ENCODE measurements at regions of chr6 and their contacts with region 1.

Region 1: GRCh38 chr6:131182991-131183425 is 47.7 kb downstream of the AKAP7 start:
- DNase-seq: peak; percentile 46
- H3K4me3 Mint-ChIP-seq: no peak overlapping the region
- H3K27ac Mint-ChIP-seq: peak overlapping the region; percentile 85
- H3K4me1 Mint-ChIP-seq: peaks cover 11% of the 10 kb centered on the region
- H3K27me3 Mint-ChIP-seq: no peaks in the 10 kb centered on the region

Region 2: DNA sequence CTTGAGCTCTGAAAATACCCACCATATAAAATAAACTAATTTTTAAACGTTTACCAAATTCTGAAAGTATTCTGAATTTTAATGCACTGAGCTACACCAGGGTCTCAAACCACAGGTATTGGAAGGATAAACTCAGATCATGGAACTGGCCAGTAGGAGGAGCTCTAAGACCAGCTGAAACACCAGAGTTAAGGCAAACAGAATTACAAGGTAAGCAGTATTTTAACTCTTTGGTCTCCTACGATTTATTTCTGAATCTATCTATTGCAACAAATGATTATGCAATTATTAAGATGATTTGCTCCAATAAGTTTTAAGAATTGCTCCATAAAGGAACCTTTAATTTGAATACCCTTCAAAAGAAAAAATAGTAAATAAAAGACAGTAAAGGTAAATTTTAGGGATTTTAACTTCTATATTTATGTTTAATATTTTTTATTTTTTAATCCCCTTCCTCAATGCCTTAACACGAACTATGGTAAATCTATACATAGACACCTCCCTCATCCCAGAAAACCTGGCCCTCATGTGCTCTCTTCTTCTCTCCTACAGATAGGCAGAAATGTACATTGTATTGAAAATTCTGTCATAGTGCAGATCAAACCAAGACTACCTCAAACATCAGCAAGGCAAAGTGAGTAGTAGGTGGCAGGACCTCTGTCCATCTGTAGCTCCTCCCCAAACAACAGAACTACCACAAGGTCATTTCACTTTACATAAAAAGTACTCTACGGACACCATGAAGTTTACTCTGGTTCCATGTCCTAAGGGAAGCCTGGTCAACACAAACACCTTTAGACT is 297.4 kb before region 1 on chr6:
- CTCF ChIA-PET with region 1: interaction called, 11 read pairs
- DNase-seq: peak; percentile 82
- H3K4me3 Mint-ChIP-seq: no peak overlapping the region
- H3K27ac Mint-ChIP-seq: no peak overlapping the region
- H3K4me1 Mint-ChIP-seq: no peaks in the 10 kb centered on the region
- H3K27me3 Mint-ChIP-seq: no peaks in the 10 kb centered on the region

Region 3: GRCh38 chr6:131096786-131097185 is 86.2 kb before region 1 on chr6:
- CTCF ChIA-PET with region 1: no interaction called
- DNase-seq: no peak
- H3K4me3 Mint-ChIP-seq: no peak overlapping the region
- H3K27ac Mint-ChIP-seq: no peak overlapping the region
- H3K4me1 Mint-ChIP-seq: no peaks in the 10 kb centered on the region
- H3K27me3 Mint-ChIP-seq: no peaks in the 10 kb centered on the region

Region 4: GRCh38 chr6:131199568-131200272 is 16.7 kb after region 1 on chr6:
- CTCF ChIA-PET with region 1: interaction called, 51 read pairs
- DNase-seq: peak; percentile 85
- H3K4me3 Mint-ChIP-seq: peak overlapping the region; percentile 72
- H3K27ac Mint-ChIP-seq: peak overlapping the region; percentile 97
- H3K4me1 Mint-ChIP-seq: peaks cover 63% of the 10 kb centered on the region
- H3K27me3 Mint-ChIP-seq: no peaks in the 10 kb centered on the region

Region 5: GRCh38 chr6:131519670-131520436 is 336.8 kb after region 1 on chr6:
- CTCF ChIA-PET with region 1: interaction called, 12 read pairs
- DNase-seq: peak; percentile 65
- H3K4me3 Mint-ChIP-seq: no peak overlapping the region
- H3K27ac Mint-ChIP-seq: no peak overlapping the region
- H3K4me1 Mint-ChIP-seq: peaks cover 17% of the 10 kb centered on the region
- H3K27me3 Mint-ChIP-seq: no peaks in the 10 kb centered on the region

Region 6: GRCh38 chr6:131627724-131628682 is 445.0 kb after region 1 on chr6 and contains the start of gene MED23:
- CTCF ChIA-PET with region 1: interaction called, 18 read pairs
- DNase-seq: peak; percentile 94
- H3K4me3 Mint-ChIP-seq: peak within 1 kb of the TSS; percentile 98
- H3K27ac Mint-ChIP-seq: peak within 1 kb of the TSS; percentile 96
- H3K4me1 Mint-ChIP-seq: peaks cover 31% of the 10 kb centered on the region
- H3K27me3 Mint-ChIP-seq: peaks cover 6% of the 10 kb centered on the region